Activated T-helper 1 cell treated with anti-CD3 and anti-CD28 coated beads, Interleukin-12 subunit alpha, Interleukin-12 subunit beta, Interleukin-2, Interleukin-4 antibody, amounts not matched to agents 30 ng/mL and 10 ng/mL and 1 ng/mL, durations not matched to agents 14 hours and 24 hours and 36 hours (primary cell): ENCODE measurements at regions of chr9 and their contacts with region 1.

Region 1: DNA sequence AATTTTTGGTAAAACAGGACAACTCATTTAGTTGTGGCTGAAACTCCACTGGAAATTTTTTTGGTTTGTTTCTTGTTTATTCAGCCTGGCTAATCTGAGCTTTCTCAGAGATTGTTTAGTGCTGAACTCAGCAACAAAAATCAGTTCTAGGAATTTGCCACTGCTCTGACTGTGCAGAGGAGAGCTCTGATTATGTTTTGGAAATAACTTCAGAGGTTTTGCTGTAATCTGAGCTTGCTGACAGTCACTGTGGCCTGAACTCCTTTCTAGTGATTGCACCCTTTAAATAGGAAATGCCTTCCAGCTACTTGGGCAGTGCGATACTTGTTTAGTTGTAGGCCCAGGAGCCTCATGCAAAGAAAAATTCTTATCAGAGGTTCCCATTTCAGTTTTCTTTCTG is 60.2 kb downstream of the OSTF1 start:
- DNase-seq: peak; percentile 37
- H3K4me3 Mint-ChIP-seq: peak overlapping the region; percentile 62
- H3K27ac Mint-ChIP-seq: peak overlapping the region; percentile 87
- H3K4me1 Mint-ChIP-seq: peaks cover 79% of the 10 kb centered on the region
- H3K27me3 Mint-ChIP-seq: no peaks in the 10 kb centered on the region

Region 2: GRCh38 chr9:74952281-74953151 is 196.0 kb before region 1 on chr9 and contains the start of gene C9orf40:
- intact Hi-C with region 1: loop called (anchors 2 kb)
- DNase-seq: peak; percentile 86
- H3K4me3 Mint-ChIP-seq: peak within 1 kb of the TSS; percentile 98
- H3K27ac Mint-ChIP-seq: peak within 1 kb of the TSS; percentile 99
- H3K4me1 Mint-ChIP-seq: peaks cover 44% of the 10 kb centered on the region
- H3K27me3 Mint-ChIP-seq: no peaks in the 10 kb centered on the region
- total RNA-seq, gene C9orf40: 18.1 and 18.3 TPM in 2 replicates

Region 3: DNA sequence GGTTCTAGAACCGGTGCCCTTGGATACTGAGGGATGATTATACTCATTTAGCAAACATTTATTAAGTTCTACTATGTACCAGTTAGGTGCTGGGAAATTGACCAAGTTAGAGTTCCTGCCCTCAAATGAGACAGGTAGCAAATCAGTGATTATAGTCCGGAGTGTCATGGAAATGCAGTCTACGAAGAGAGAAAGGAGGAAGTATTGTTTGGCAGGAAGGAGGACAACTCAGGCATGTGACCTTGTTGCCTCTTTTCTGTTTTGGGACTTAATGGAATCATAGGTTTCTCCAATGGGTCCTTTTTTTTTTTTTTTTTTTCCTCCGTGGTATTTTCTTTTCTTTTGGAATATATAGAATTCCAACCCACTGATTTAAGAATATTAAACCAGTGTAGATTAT is 32.3 kb before region 1 on chr9:
- intact Hi-C with region 1: loop called (anchors 5 kb)
- DNase-seq: no peak
- H3K4me3 Mint-ChIP-seq: no peak overlapping the region
- H3K27ac Mint-ChIP-seq: no peak overlapping the region
- H3K4me1 Mint-ChIP-seq: peaks cover 50% of the 10 kb centered on the region
- H3K27me3 Mint-ChIP-seq: no peaks in the 10 kb centered on the region

Region 4: GRCh38 chr9:75130621-75131230 is 17.8 kb before region 1 on chr9:
- intact Hi-C with region 1: loop called (anchors 1 kb)
- DNase-seq: no peak
- H3K4me3 Mint-ChIP-seq: no peak overlapping the region
- H3K27ac Mint-ChIP-seq: peak overlapping the region; percentile 35
- H3K4me1 Mint-ChIP-seq: peaks cover 56% of the 10 kb centered on the region
- H3K27me3 Mint-ChIP-seq: no peaks in the 10 kb centered on the region

Region 5: DNA sequence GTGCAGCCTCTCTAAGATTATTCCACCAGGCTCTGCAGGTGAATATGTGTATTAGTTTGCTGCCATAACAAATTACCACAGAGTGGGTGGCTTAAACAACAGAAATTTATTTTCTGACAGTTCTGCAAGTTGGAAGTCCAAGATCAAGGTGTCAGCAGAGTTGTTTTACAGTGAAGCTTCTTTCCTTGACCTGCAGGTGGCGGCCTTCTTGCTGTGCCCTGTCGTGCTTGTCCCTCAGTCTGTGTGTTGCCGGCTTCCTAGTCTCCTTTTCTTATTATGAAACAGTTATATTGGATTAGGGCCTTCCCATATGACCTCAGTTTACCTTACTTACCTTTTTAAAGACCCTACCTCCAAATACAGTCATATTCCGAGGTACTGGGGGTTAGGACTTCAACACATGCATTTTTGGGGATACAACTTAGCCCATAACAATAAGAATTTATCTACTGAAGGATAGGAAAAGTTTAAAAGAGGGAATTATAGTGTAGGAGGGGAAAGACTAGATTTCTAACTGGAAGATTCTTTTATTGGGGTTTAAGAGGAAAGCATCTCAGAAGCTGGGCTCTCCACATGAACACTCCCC is 37.1 kb after region 1 on chr9:
- intact Hi-C with region 1: loop called (anchors 1 kb)
- DNase-seq: peak; percentile 11
- H3K4me3 Mint-ChIP-seq: no peak overlapping the region
- H3K27ac Mint-ChIP-seq: no peak overlapping the region
- H3K4me1 Mint-ChIP-seq: peaks cover 27% of the 10 kb centered on the region
- H3K27me3 Mint-ChIP-seq: no peaks in the 10 kb centered on the region

Region 6: DNA sequence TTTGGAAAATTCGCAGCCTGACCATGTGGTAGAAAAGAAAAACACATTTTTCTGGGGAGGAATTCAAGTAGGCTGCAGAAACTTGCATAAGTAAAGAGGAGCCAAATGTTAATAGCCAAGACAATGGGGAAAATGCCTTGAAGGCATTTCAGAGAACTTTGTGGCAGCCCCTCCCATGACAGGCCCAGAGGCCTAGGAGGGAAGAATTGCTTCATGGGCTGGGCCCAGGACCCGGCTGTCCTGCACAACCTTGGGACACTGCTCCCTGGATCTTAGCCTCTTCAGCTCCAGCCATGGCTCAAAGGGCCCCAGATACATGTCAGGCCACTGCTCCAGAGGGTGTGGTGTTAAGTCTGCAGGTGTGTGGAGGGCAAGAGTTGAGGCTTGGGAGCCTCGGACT is 98.4 kb after region 1 on chr9:
- intact Hi-C with region 1: no loop called
- DNase-seq: no peak
- H3K4me3 Mint-ChIP-seq: no peak overlapping the region
- H3K27ac Mint-ChIP-seq: no peak overlapping the region
- H3K4me1 Mint-ChIP-seq: no peaks in the 10 kb centered on the region
- H3K27me3 Mint-ChIP-seq: peaks cover 3% of the 10 kb centered on the region